CD8-positive, alpha-beta T cell (primary cell): ENCODE measurements at regions of chr12 and their contacts with region 1.

Region 1: GRCh38 chr12:6335451-6336078 is 6.3 kb downstream of the TNFRSF1A start:
- DNase-seq: peak; percentile 68 to 95 (median 89)
- ATAC-seq: peak; percentile 68
- H3K4me3 ChIP-seq: peak overlapping the region; percentile 77 to 99
- H3K4me3 Mint-ChIP-seq: no peak overlapping the region
- H3K27ac ChIP-seq: peak overlapping the region; percentile 61 to 87
- H3K27ac Mint-ChIP-seq: no peak overlapping the region
- H3K4me1 ChIP-seq: peaks cover 82% of the 10 kb centered on the region
- H3K4me1 Mint-ChIP-seq: peaks cover 53% of the 10 kb centered on the region
- H3K27me3 ChIP-seq: no peaks in the 10 kb centered on the region
- H3K27me3 Mint-ChIP-seq: no peaks in the 10 kb centered on the region
- CTCF ChIP-seq: peak; percentile 71

Region 2: GRCh38 chr12:6323340-6323994 is 12.1 kb before region 1 on chr12:
- CTCF ChIA-PET with region 1: interaction called, 51 read pairs
- POLR2A ChIA-PET with region 1: interaction called, 25 read pairs
- intact Hi-C with region 1: loop called in 1 of 2 experiments (anchors 2 kb)
- DNase-seq: peak in 6 of 9 experiments; percentile 40 to 83 (median 59)
- ATAC-seq: peak; percentile 85
- H3K4me3 ChIP-seq: peak overlapping the region; percentile 12 to 19
- H3K4me3 Mint-ChIP-seq: peak overlapping the region; percentile 80
- H3K27ac ChIP-seq: peak overlapping the region in 1 of 2 experiments; percentile 54
- H3K27ac Mint-ChIP-seq: peak overlapping the region; percentile 93
- H3K4me1 ChIP-seq: peaks cover 47% of the 10 kb centered on the region
- H3K4me1 Mint-ChIP-seq: peaks cover 63% of the 10 kb centered on the region
- H3K27me3 ChIP-seq: no peaks in the 10 kb centered on the region
- H3K27me3 Mint-ChIP-seq: no peaks in the 10 kb centered on the region
- CTCF ChIP-seq: peak; percentile 82

Region 3: GRCh38 chr12:6367065-6367968 is 31.8 kb after region 1 on chr12:
- CTCF ChIA-PET with region 1: interaction called, 142 read pairs
- POLR2A ChIA-PET with region 1: interaction called, 13 read pairs
- intact Hi-C with region 1: loop called (anchors 1 kb)
- DNase-seq: peak in 7 of 9 experiments; percentile 34 to 81 (median 54)
- ATAC-seq: peak; percentile 66
- H3K4me3 ChIP-seq: no peak overlapping the region
- H3K4me3 Mint-ChIP-seq: peak overlapping the region; percentile 26
- H3K27ac ChIP-seq: peak overlapping the region in 1 of 2 experiments; percentile 51
- H3K27ac Mint-ChIP-seq: peak overlapping the region; percentile 69
- H3K4me1 ChIP-seq: peaks cover 25% of the 10 kb centered on the region
- H3K4me1 Mint-ChIP-seq: peaks cover 37% of the 10 kb centered on the region
- H3K27me3 ChIP-seq: no peaks in the 10 kb centered on the region
- H3K27me3 Mint-ChIP-seq: no peaks in the 10 kb centered on the region
- CTCF ChIP-seq: no peak

Region 4: DNA sequence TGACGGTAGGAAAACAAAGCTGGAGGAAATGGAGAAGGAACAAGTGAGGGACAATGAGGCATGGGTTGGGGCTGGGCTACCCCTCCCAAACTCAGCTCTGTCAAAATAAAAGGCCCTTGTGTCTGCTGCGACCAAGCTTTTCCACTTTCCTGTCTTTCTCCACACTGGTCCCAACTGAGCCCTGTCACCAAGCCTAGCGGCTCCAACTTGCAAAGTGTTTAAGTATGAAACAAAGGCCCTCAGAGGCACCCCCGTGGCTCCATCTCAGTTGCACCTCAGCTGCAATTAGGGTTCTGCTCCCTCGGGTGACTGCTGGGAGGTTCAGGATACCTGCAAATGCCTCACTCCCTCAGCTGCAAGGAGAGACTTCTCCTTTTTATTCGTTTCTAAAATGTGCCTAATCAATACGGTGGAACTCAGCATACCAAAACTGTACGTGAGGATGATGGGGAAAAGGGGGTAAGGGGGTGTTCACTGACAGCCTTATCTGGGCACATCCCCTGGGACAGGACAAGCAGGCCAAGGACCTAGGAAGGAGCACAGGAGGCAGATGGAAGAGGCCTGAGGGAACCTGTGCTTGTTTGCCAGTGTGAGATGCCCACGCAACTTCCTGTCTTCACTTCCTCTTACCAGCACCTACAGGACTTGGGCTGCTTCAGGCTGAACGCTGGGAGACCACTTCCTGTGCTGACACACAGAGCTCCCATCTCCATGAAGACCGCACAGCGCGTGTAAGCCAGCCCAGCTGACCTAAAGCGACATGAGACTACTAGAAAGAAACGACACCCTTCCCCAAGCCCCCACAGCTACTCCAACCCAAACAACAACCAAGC is 126.1 kb after region 1 on chr12:
- CTCF ChIA-PET with region 1: interaction called, 36 read pairs
- POLR2A ChIA-PET with region 1: interaction called, 17 read pairs
- intact Hi-C with region 1: loop called (anchors 1 to 2 kb)
- DNase-seq: peak; percentile 58 to 97 (median 86)
- ATAC-seq: peak; percentile 77
- H3K4me3 ChIP-seq: peak overlapping the region; percentile 32 to 36
- H3K4me3 Mint-ChIP-seq: peak overlapping the region; percentile 78
- H3K27ac ChIP-seq: peak overlapping the region; percentile 84 to 96
- H3K27ac Mint-ChIP-seq: peak overlapping the region; percentile 99
- H3K4me1 ChIP-seq: peaks cover 87% of the 10 kb centered on the region
- H3K4me1 Mint-ChIP-seq: peaks cover 86% of the 10 kb centered on the region
- H3K27me3 ChIP-seq: no peaks in the 10 kb centered on the region
- H3K27me3 Mint-ChIP-seq: no peaks in the 10 kb centered on the region
- CTCF ChIP-seq: no peak

Region 5: DNA sequence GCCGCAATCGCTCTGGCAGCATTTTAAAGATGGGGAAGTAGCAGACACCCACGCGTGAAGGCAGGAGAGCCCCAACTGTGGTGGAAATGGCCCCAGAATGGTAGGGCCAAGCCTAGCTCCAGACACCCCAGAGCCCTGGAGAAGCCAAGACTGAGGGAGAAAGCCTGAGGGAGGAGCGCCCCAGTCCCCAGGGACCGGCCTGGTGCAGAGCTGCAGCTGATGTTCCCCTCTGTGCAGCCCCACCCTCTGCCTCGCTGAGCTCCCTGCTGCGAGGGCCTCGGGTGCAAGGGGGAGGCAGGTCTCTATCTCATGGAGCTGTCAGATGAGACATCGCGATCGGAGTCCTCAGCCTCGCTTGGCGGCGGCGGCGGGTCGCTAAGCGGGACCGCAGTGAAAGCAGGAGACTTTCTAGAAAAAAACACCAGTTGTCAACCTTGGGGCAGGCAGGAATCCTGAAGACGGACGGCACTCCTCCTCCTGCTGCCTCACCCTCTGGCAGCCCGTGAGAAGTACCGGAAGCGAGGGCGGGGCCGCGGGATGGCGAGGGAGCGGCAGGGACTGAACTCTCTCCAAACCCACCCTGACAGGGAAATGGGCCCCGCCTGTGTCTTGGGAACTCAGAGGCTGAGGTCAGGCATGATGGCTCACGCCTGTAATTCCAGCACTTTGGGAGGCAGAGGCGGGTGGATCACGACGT is 204.8 kb after region 1 on chr12:
- CTCF ChIA-PET with region 1: interaction called, 70 read pairs
- POLR2A ChIA-PET with region 1: interaction called, 7 read pairs
- intact Hi-C with region 1: loop called (anchors 1 kb)
- DNase-seq: peak in 6 of 9 experiments; percentile 38 to 59 (median 47)
- ATAC-seq: no peak
- H3K4me3 ChIP-seq: peak overlapping the region in 1 of 2 experiments; percentile 37
- H3K4me3 Mint-ChIP-seq: peak overlapping the region; percentile 75
- H3K27ac ChIP-seq: no peak overlapping the region
- H3K27ac Mint-ChIP-seq: peak overlapping the region; percentile 73
- H3K4me1 ChIP-seq: peaks cover 36% of the 10 kb centered on the region
- H3K4me1 Mint-ChIP-seq: peaks cover 44% of the 10 kb centered on the region
- H3K27me3 ChIP-seq: no peaks in the 10 kb centered on the region
- H3K27me3 Mint-ChIP-seq: no peaks in the 10 kb centered on the region
- CTCF ChIP-seq: no peak